PC-3 (cell line): ENCODE measurements at regions of chr2 and their contacts with region 1.

Region 1: GRCh38 chr2:207473049-207473930 is 56.5 kb upstream of the CREB1 start:
- DNase-seq: peak; percentile 86
- ATAC-seq: peak; percentile 75
- H3K4me3 ChIP-seq: no peak overlapping the region
- H3K27ac ChIP-seq: peak overlapping the region; percentile 1; the same call in 1 of the 2 replicates
- H3K4me1 ChIP-seq: peaks cover 25% of the 10 kb centered on the region
- H3K27me3 ChIP-seq: no peaks in the 10 kb centered on the region
- CTCF ChIP-seq: peak; percentile 92

Region 2: GRCh38 chr2:206693399-206694137 is 779.7 kb before region 1 on chr2:
- CTCF ChIA-PET with region 1: no interaction called
- POLR2A ChIA-PET with region 1: no interaction called
- intact Hi-C with region 1: loop called (anchors 1 kb)
- DNase-seq: peak; percentile 82
- ATAC-seq: peak; percentile 82
- H3K4me3 ChIP-seq: no peak overlapping the region
- H3K27ac ChIP-seq: no peak overlapping the region
- H3K4me1 ChIP-seq: no peaks in the 10 kb centered on the region
- H3K27me3 ChIP-seq: no peaks in the 10 kb centered on the region
- CTCF ChIP-seq: peak; percentile 84

Region 3: GRCh38 chr2:206873423-206873822 is 599.9 kb before region 1 on chr2:
- CTCF ChIA-PET with region 1: no interaction called
- POLR2A ChIA-PET with region 1: no interaction called
- intact Hi-C with region 1: no loop called
- DNase-seq: no peak
- ATAC-seq: no peak
- H3K4me3 ChIP-seq: no peak overlapping the region
- H3K27ac ChIP-seq: no peak overlapping the region
- H3K4me1 ChIP-seq: peaks cover 9% of the 10 kb centered on the region
- H3K27me3 ChIP-seq: no peaks in the 10 kb centered on the region
- CTCF ChIP-seq: no peak

Region 4: GRCh38 chr2:206981739-206982340 is 491.4 kb before region 1 on chr2:
- CTCF ChIA-PET with region 1: interaction called, 3 read pairs
- POLR2A ChIA-PET with region 1: no interaction called
- intact Hi-C with region 1: loop called (anchors 1 kb)
- DNase-seq: peak; percentile 82
- ATAC-seq: peak; percentile 82
- H3K4me3 ChIP-seq: no peak overlapping the region
- H3K27ac ChIP-seq: no peak overlapping the region
- H3K4me1 ChIP-seq: peaks cover 30% of the 10 kb centered on the region
- H3K27me3 ChIP-seq: no peaks in the 10 kb centered on the region
- CTCF ChIP-seq: peak; percentile 93

Region 5: DNA sequence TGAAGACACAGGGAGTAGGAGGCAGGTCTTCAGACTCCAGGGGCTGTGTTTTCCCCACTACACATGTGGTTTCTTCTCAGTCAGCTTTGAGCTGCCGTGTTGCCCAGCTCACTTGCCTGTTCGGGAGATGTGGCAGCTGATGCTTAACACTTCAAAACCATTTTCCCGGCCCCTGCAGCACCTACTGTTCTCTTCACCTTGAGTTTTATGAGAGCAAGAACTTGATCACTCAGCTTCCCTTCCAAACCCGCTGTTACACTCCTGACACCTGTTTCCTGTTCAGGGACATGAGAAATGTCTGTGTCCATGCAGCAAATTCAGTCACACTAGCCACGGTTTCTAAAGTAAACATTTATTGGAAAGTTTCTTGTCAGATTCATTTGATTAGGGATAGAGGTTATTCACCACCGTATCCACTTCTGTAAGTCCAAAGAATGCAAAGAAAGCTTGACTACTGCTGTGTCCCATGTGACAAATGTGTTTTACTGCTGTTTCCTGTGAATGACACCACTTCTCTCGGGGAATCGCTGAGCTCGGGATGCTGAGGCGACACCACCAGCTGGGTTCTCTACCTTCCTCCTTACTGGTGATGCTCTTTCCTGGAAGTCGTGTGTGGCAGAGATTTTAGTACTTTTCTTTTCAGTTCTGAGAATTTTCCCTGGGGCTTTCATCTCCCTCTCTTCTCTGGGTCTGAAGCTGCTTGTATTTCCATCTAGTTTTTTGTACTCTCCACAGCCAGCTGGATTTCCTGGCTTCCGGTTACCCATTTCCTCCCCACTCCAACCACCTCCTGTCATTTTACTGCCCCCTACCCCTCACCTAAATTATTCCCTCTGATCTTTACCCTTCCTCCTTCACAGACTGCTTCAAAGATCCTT is 399.2 kb before region 1 on chr2:
- CTCF ChIA-PET with region 1: no interaction called
- POLR2A ChIA-PET with region 1: no interaction called
- intact Hi-C with region 1: loop called (anchors 10 kb)
- DNase-seq: peak; percentile 13
- ATAC-seq: peak; percentile 43
- H3K4me3 ChIP-seq: no peak overlapping the region
- H3K27ac ChIP-seq: no peak overlapping the region
- H3K4me1 ChIP-seq: no peaks in the 10 kb centered on the region
- H3K27me3 ChIP-seq: no peaks in the 10 kb centered on the region
- CTCF ChIP-seq: no peak

Region 6: DNA sequence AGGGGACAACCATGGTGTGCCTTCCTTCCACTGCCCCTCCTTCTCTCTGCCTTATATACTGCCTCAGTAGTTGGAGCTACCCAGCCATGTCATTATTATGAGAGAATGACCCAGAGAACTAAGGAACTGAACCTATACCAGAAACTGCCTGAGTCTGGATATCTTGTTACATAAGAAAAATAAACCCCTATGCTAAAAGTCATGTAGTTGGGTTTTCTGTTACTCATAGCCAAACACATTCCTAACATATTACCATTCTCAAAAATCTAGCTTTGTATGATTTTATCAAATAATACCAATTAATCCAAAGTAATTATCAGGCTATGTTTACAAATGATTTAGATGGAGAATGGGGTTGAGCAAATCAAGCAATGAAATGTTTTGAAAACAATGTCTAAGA is 292.5 kb before region 1 on chr2:
- CTCF ChIA-PET with region 1: interaction called, 3 read pairs
- POLR2A ChIA-PET with region 1: no interaction called
- intact Hi-C with region 1: loop called (anchors 1 kb)
- DNase-seq: peak; percentile 27
- ATAC-seq: no peak
- H3K4me3 ChIP-seq: no peak overlapping the region
- H3K27ac ChIP-seq: peak overlapping the region; percentile 60
- H3K4me1 ChIP-seq: peaks cover 51% of the 10 kb centered on the region
- H3K27me3 ChIP-seq: no peaks in the 10 kb centered on the region
- CTCF ChIP-seq: no peak

Region 7: GRCh38 chr2:207334624-207335371 is 138.5 kb before region 1 on chr2:
- CTCF ChIA-PET with region 1: no interaction called
- POLR2A ChIA-PET with region 1: no interaction called
- intact Hi-C with region 1: loop called (anchors 5 kb)
- DNase-seq: peak; percentile 94
- ATAC-seq: peak; percentile 71
- H3K4me3 ChIP-seq: peak overlapping the region; percentile 57
- H3K27ac ChIP-seq: peak overlapping the region; percentile 92
- H3K4me1 ChIP-seq: peaks cover 55% of the 10 kb centered on the region
- H3K27me3 ChIP-seq: no peaks in the 10 kb centered on the region
- CTCF ChIP-seq: no peak

Region 8: GRCh38 chr2:207529330-207530159 is 56.3 kb after region 1 on chr2 and contains the start of gene CREB1:
- CTCF ChIA-PET with region 1: interaction called, 3 read pairs
- POLR2A ChIA-PET with region 1: interaction called, 6 read pairs
- intact Hi-C with region 1: loop called (anchors 1 kb)
- DNase-seq: peak; percentile 99
- ATAC-seq: peak; percentile 89
- H3K4me3 ChIP-seq: peak within 1 kb of the TSS; percentile 83
- H3K27ac ChIP-seq: peak within 1 kb of the TSS; percentile 89
- H3K4me1 ChIP-seq: peaks cover 25% of the 10 kb centered on the region
- H3K27me3 ChIP-seq: no peaks in the 10 kb centered on the region
- CTCF ChIP-seq: no peak
- total RNA-seq, gene CREB1: 34.8 and 43.5 TPM in 2 replicates